Activated CD4-positive, alpha-beta T cell treated with anti-CD3 and anti-CD28 coated beads, Interleukin-2, amount 10 ng/mL, durations not matched to agents 24 days and 14 days (primary cell): ENCODE measurements at regions of chr5 and their contacts with region 1.

Region 1: GRCh38 chr5:40679155-40679913 is 381 bp upstream of the PTGER4 start:
- DNase-seq: peak; percentile 98
- H3K4me3 Mint-ChIP-seq: peak overlapping the region; percentile 99
- H3K27ac Mint-ChIP-seq: peak overlapping the region; percentile 99
- H3K4me1 Mint-ChIP-seq: peaks cover 48% of the 10 kb centered on the region
- H3K27me3 Mint-ChIP-seq: no peaks in the 10 kb centered on the region

Region 2: GRCh38 chr5:39202597-39203274 is 1476.6 kb before region 1 on chr5:
- intact Hi-C with region 1: loop called (anchors 5 kb)
- DNase-seq: peak; percentile 83
- H3K4me3 Mint-ChIP-seq: peak overlapping the region; percentile 90
- H3K27ac Mint-ChIP-seq: peak overlapping the region; percentile 90
- H3K4me1 Mint-ChIP-seq: peaks cover 47% of the 10 kb centered on the region
- H3K27me3 Mint-ChIP-seq: no peaks in the 10 kb centered on the region

Region 3: GRCh38 chr5:40410231-40410861 is 269.0 kb before region 1 on chr5:
- intact Hi-C with region 1: loop called (anchors 1 kb)
- DNase-seq: peak; percentile 93
- H3K4me3 Mint-ChIP-seq: peak overlapping the region; percentile 79
- H3K27ac Mint-ChIP-seq: peak overlapping the region; percentile 93
- H3K4me1 Mint-ChIP-seq: peaks cover 51% of the 10 kb centered on the region
- H3K27me3 Mint-ChIP-seq: no peaks in the 10 kb centered on the region

Region 4: DNA sequence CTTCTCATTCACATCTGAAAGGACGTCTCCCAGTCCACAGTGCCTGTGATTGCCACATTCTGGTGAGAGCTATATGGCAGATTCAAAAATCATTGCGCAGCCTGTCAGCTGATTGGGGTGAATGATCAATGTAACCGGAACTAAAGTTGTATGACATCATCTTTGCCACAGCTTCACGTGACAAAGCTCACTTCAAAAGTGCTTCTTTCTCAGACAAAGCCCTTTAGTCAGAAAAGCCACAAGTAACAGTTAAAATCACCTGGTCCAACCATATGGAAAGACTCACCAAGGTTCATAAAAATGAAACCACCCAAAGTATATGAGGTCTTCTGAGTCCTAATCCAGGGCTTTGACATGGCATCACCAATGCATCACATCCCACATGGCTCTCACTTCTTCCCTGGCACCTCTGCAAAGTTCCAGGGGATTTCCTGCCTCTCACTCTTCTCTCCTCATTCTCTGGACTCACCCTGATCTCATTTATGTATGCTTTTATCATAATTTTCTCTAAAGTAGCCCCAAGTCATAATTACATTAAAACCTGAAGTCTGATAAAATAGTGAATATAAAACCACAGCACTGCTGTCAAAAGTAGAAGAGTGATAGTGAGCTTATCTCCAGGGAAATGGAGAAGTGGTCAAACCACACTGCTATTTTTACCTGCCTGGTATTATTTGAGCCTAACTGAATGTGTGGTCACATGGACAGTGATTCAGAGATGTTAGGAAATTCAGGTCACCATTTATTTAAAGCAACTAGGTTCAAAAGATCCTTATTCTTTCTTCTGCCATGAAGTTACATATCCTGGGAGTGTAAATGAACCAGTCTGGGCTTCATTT is 192.7 kb before region 1 on chr5:
- intact Hi-C with region 1: loop called (anchors 1 kb)
- DNase-seq: peak; percentile 89
- H3K4me3 Mint-ChIP-seq: peak overlapping the region; percentile 45
- H3K27ac Mint-ChIP-seq: peak overlapping the region; percentile 89
- H3K4me1 Mint-ChIP-seq: peaks cover 55% of the 10 kb centered on the region
- H3K27me3 Mint-ChIP-seq: no peaks in the 10 kb centered on the region

Region 5: GRCh38 chr5:40497573-40497972 is 181.8 kb before region 1 on chr5:
- intact Hi-C with region 1: no loop called
- DNase-seq: no peak
- H3K4me3 Mint-ChIP-seq: no peak overlapping the region
- H3K27ac Mint-ChIP-seq: no peak overlapping the region
- H3K4me1 Mint-ChIP-seq: peaks cover 15% of the 10 kb centered on the region
- H3K27me3 Mint-ChIP-seq: no peaks in the 10 kb centered on the region

Region 6: DNA sequence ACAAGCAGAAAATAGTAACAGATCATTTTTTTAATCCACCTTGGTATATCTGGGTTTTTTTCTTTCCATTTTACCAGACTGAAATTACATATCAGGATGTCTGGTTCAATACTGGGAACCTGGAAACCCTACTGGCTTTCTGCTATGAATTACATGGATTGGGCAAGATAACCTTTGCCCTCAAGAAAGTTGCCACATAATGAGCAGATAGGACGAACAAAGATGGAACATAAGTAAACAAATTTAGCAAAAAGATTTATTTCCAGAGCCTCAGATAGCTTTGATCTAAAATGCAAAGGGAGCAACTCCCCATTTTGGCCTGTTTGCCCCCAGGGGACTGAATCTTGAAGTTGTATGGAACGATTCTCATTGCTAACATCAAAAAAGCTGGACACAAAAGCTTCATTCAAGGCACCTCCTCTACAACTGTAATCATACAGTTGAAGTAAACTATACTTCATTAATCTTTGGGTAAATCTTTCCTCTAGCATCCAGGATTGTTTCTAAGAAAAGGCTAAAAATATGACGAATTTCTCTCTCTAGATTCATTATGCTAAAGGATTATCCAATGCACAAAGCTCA is 131.2 kb before region 1 on chr5:
- intact Hi-C with region 1: no loop called
- DNase-seq: no peak
- H3K4me3 Mint-ChIP-seq: no peak overlapping the region
- H3K27ac Mint-ChIP-seq: no peak overlapping the region
- H3K4me1 Mint-ChIP-seq: no peaks in the 10 kb centered on the region
- H3K27me3 Mint-ChIP-seq: no peaks in the 10 kb centered on the region

Region 7: DNA sequence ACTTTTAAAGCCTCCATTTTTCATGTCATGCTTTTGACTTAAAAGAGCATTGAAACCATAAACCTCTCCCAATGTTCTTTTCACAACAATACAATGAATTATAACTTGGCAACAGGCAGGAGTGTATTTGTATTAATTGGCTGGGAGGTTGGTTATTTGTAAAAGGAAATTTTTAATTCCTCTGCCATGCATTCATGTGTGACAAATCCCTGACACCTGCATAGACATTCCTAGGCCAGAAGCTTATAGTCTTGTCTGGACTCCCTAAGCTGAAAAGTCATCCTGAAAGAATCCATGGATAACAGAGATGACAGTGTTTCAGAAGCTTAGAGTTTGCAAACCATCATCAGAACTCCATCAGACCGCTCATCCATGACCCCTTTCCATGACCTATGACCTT is 76.0 kb before region 1 on chr5:
- intact Hi-C with region 1: loop called (anchors 5 kb)
- DNase-seq: no peak
- H3K4me3 Mint-ChIP-seq: no peak overlapping the region
- H3K27ac Mint-ChIP-seq: no peak overlapping the region
- H3K4me1 Mint-ChIP-seq: peaks cover 36% of the 10 kb centered on the region
- H3K27me3 Mint-ChIP-seq: no peaks in the 10 kb centered on the region

Region 8: GRCh38 chr5:40653221-40654022 is 25.9 kb before region 1 on chr5:
- intact Hi-C with region 1: loop called (anchors 1 kb)
- DNase-seq: peak; percentile 72
- H3K4me3 Mint-ChIP-seq: peak overlapping the region; percentile 88
- H3K27ac Mint-ChIP-seq: peak overlapping the region; percentile 95
- H3K4me1 Mint-ChIP-seq: peaks cover 75% of the 10 kb centered on the region
- H3K27me3 Mint-ChIP-seq: no peaks in the 10 kb centered on the region

Region 9: GRCh38 chr5:40781843-40782409 is 102.6 kb after region 1 on chr5:
- intact Hi-C with region 1: no loop called
- DNase-seq: no peak
- H3K4me3 Mint-ChIP-seq: no peak overlapping the region
- H3K27ac Mint-ChIP-seq: no peak overlapping the region
- H3K4me1 Mint-ChIP-seq: peaks cover 13% of the 10 kb centered on the region
- H3K27me3 Mint-ChIP-seq: no peaks in the 10 kb centered on the region

Region 10: DNA sequence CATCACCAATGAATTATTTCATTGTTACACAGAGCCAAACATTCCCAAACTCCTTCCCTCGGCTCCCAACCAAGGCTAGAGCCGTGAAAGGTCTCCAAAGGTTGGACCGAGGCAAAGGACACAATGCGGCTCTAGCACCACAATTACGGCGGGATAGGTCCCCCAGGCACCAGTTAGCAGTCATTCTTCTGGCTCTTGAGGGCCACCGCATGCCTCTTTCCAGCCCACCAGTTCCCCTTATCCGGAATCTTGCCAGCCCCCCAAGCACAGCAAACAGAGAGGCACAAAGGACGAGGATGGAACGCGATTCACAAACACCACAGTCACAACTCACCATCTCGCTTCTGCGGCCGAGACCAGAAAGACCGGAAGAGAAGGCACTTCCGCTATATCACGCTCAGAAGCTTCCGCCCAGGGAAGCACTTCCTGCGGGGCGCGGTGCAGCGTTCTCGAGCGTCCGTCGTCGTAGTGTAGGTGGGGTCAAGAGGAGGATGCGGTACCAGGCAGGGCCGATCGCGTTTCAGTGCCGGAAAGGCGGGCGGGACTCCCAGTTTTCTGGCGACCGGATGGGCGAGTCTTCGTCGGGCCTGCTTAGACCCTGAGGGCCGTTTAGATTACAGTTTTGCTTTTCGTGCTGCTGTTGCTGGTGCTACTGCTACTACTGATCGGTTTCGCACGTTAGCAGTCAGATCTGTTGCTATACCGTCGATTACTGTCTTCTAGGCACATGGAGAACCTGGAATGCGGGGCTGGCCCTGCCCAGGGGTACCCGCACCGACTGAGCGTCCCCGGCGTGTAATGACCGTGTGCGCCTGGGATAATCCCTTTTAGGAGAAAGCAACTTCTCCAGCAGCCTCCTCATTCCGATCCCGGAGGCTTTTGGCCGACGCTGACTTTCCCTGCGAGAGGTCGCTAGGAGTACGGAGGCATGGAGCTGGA is 155.8 kb after region 1 on chr5 and contains the start of gene RPL37:
- intact Hi-C with region 1: loop called (anchors 2 kb)
- DNase-seq: peak; percentile 97
- H3K4me3 Mint-ChIP-seq: peak within 1 kb of the TSS; percentile 97
- H3K27ac Mint-ChIP-seq: peak within 1 kb of the TSS; percentile 99
- H3K4me1 Mint-ChIP-seq: peaks cover 43% of the 10 kb centered on the region
- H3K27me3 Mint-ChIP-seq: no peaks in the 10 kb centered on the region
- total RNA-seq, gene RPL37: 1,546 and 1,565 TPM in 2 replicates

Region 11: GRCh38 chr5:40879163-40879942 is 200.0 kb after region 1 on chr5:
- intact Hi-C with region 1: no loop called
- DNase-seq: no peak
- H3K4me3 Mint-ChIP-seq: no peak overlapping the region
- H3K27ac Mint-ChIP-seq: no peak overlapping the region
- H3K4me1 Mint-ChIP-seq: peaks cover 3% of the 10 kb centered on the region
- H3K27me3 Mint-ChIP-seq: peaks cover 13% of the 10 kb centered on the region